ENCODE measurements at regions of chr17 and their contacts with region 1.

Region 1: GRCh38 chr17:29111816-29112499 is 68.2 kb downstream of the MYO18A start:
- DNase-seq: peak; percentile 65 to 73
- ATAC-seq: peak; percentile 70 to 83
- H3K4me3 ChIP-seq: no peak overlapping the region
- H3K27ac ChIP-seq: no peak overlapping the region
- H3K4me1 ChIP-seq: peaks cover 17% of the 10 kb centered on the region
- CTCF ChIP-seq: peak; percentile 89
- EP300 ChIP-seq: no peak
- POLR2A ChIP-seq: no peak
- RAD21 ChIP-seq: peak; percentile 78 to 83

Region 2: GRCh38 chr17:28973425-28973824 is 138.5 kb before region 1 on chr17:
- CTCF ChIA-PET with region 1: interaction called, 255 read pairs
- POLR2A ChIA-PET with region 1: no interaction called
- DNase-seq: no peak
- ATAC-seq: peak in 1 of 2 experiments; percentile 26; a peak in 1 of 6 replicates
- H3K4me3 ChIP-seq: no peak overlapping the region
- H3K27ac ChIP-seq: no peak overlapping the region
- H3K4me1 ChIP-seq: no peaks in the 10 kb centered on the region
- CTCF ChIP-seq: no peak
- EP300 ChIP-seq: no peak
- POLR2A ChIP-seq: no peak
- RAD21 ChIP-seq: no peak

Region 3: GRCh38 chr17:28982131-28982951 is 129.6 kb before region 1 on chr17:
- CTCF ChIA-PET with region 1: interaction called, 29 read pairs
- POLR2A ChIA-PET with region 1: no interaction called
- DNase-seq: no peak
- ATAC-seq: no peak
- H3K4me3 ChIP-seq: no peak overlapping the region
- H3K27ac ChIP-seq: no peak overlapping the region
- H3K4me1 ChIP-seq: no peaks in the 10 kb centered on the region
- CTCF ChIP-seq: no peak
- EP300 ChIP-seq: no peak
- POLR2A ChIP-seq: no peak
- RAD21 ChIP-seq: no peak

Region 4: DNA sequence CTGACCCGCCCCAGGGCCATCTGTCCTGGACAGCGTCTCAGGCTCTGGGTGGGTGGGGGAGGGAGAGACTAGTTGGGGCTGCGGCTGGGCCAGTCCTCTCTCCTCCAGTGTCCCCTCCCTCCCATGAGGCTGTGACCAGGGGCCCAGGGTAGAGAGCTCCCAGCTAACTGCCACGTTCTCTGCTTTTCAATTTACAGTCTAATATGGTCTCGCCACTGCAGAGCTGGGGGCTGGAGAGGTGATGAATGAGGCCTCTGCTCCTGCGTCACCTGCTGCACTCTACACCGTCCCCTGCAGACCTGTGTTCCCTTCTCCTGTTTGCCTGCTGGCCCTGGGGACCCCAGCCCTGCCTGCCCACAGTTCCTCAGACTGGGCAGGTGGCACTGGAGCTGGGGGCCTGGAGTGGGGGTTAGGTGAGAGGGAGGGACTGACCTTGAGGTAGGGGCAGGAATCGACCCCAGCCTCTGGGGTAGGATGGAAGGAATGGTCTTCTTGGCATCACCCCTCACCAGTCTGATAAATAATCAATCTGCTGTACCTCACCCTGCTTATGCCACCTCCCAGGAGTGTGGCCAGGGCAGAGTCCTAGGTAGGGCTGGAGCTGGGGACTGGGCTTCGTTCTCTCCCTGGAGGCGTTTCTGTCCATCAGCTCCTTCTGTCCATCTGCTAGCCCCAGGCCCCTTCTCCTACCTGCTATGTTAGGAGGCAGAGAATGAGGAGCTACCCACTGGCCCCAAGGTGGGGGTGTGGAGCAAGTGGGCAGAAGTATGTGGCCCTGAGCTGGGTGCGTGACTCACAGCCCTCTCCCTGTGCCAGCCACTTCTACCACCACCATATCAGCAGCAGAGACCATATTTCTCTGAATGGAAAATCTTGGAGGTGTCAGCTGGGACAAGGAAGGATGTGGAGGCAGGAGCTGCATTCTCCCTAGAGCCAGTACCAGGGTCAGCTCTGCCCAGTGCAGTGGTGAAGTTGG is 119.0 kb before region 1 on chr17:
- CTCF ChIA-PET with region 1: interaction called, 33 read pairs
- POLR2A ChIA-PET with region 1: no interaction called
- DNase-seq: peak in 1 of 2 experiments; percentile 32
- ATAC-seq: peak; percentile 53 to 68; a peak in 5 of 6 replicates
- H3K4me3 ChIP-seq: no peak overlapping the region
- H3K27ac ChIP-seq: no peak overlapping the region
- H3K4me1 ChIP-seq: no peaks in the 10 kb centered on the region
- CTCF ChIP-seq: no peak
- EP300 ChIP-seq: no peak
- POLR2A ChIP-seq: no peak
- RAD21 ChIP-seq: no peak

Region 5: DNA sequence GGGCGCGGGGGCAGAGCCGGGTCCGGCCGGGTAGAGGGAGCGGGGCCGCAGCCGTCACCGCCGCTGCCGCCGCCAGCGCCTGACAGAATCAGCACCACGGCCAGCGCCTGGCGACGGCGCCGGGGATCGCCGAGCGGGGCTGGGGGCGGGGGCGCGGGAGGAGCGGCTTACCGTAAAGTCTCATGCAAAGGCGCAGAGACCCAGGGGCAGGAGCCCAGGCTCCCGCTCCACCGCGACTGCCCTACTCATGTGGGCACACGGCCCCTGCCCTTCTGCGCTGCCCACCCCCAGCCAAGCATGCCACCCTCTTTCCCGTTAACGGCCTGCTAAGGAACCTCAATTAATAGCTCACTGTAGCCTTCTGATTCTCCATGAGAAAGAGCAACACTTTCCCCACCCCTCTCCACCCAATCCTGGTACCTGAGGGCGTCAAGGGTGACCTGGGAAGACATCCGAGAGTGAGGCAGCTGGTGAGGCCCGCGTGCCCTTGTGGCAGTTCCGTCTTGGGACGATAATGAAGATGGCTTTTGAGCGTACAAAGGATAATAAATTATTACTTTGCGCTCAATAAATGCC is 105.9 kb before region 1 on chr17 and contains the start of gene SEZ6:
- CTCF ChIA-PET with region 1: interaction called, 34 read pairs
- POLR2A ChIA-PET with region 1: no interaction called
- DNase-seq: peak; percentile 65 to 79
- ATAC-seq: peak; percentile 54 to 76
- H3K4me3 ChIP-seq: peak within 1 kb of the TSS; percentile 38
- H3K27ac ChIP-seq: no peak within 1 kb of the TSS
- H3K4me1 ChIP-seq: peaks cover 31% of the 10 kb centered on the region
- CTCF ChIP-seq: no peak
- EP300 ChIP-seq: no peak; a peak in 1 of 5 replicates
- POLR2A ChIP-seq: no peak
- RAD21 ChIP-seq: no peak
- polyA plus RNA-seq, gene SEZ6: not detected in 2 replicates

Region 6: DNA sequence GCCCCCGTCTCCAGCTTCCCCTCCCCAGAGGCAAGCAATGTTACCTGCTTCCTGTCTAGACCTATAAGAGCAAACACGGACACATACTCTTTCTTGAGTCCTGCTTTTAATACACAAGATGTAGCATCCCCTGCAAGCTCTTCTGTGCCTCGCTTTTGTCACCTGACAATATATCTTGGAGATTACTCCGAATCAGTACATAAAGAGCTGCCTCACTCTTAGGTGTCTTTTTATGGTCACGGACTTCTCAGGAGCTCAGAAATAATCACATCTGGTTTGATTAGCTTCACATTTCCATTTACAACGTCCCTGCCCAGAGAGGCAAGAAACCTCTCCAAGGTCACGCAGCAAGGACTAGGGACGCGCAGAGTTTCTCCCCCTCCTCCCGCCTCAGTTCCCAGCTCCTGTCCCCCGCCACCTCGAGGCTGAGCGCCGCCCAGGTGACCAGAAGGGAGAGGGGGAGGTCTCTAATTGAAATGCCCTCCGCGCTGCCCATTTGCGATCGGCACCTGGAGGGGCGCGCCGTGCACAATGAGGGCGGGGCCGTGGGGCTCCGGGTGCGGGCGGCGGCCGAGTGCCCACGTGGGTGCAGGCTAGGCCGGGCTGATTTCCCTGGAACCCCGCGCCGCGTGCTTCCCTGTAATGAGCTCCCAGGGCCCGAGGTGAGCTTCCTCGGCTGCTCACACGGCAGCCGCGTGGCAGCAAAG is 92.3 kb before region 1 on chr17:
- CTCF ChIA-PET with region 1: interaction called, 36 read pairs
- POLR2A ChIA-PET with region 1: no interaction called
- DNase-seq: no peak
- ATAC-seq: no peak
- H3K4me3 ChIP-seq: no peak overlapping the region
- H3K27ac ChIP-seq: no peak overlapping the region
- H3K4me1 ChIP-seq: no peaks in the 10 kb centered on the region
- CTCF ChIP-seq: no peak
- EP300 ChIP-seq: no peak
- POLR2A ChIP-seq: no peak
- RAD21 ChIP-seq: no peak

Region 7: GRCh38 chr17:29054835-29055234 is 57.1 kb before region 1 on chr17:
- CTCF ChIA-PET with region 1: interaction called, 10 read pairs
- POLR2A ChIA-PET with region 1: no interaction called
- DNase-seq: no peak
- ATAC-seq: peak in 1 of 2 experiments; percentile 7; a peak in 1 of 6 replicates
- H3K4me3 ChIP-seq: no peak overlapping the region
- H3K27ac ChIP-seq: no peak overlapping the region
- H3K4me1 ChIP-seq: peaks cover 7% of the 10 kb centered on the region
- CTCF ChIP-seq: no peak
- EP300 ChIP-seq: no peak
- POLR2A ChIP-seq: no peak
- RAD21 ChIP-seq: no peak

Region 8: DNA sequence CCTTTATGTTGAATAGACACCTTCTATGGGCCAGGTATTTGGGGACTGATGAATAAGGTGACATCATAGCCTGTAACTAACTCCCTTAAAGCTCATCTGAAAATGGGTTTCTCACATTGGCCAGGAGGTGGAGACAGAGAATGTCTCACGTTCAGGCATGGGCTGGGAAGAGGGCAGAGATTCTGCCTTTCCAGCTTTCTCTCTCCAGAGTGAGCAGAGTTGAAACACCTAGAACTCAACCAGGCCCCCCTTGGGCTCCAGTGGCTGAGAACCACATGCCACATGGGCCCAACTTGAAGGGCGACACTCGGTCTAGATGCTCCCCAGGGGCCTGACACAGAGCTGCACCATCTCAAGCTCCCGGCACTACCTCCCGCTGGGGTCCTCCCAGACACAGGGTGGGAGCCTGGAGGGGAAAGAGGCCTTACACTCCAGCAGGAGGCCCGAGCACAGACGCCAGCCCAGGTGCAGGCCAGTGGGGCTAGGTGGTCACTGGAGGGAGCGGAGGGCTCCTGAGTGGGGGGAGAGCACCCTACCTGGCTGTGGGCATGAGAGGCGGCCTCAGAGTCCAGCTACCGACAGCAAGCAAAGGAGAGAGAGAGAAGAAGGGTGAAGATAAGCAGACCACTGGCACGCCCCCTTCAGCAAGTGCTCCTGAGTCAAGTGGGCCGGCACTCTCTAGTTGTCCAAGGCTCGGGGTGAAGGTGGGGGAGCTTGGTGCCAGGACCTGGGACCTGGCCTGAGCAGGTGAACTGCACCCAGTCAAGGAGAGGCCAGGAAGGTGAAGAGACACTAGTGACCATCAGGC is 12.4 kb after region 1 on chr17:
- CTCF ChIA-PET with region 1: no interaction called
- POLR2A ChIA-PET with region 1: no interaction called
- DNase-seq: peak; percentile 82 to 83
- ATAC-seq: peak; percentile 83 to 93
- H3K4me3 ChIP-seq: no peak overlapping the region
- H3K27ac ChIP-seq: peak overlapping the region in 1 of 2 experiments; percentile 39; a peak in 3 of 6 replicates
- H3K4me1 ChIP-seq: peaks cover 16% of the 10 kb centered on the region
- CTCF ChIP-seq: peak; percentile 88
- EP300 ChIP-seq: no peak
- POLR2A ChIP-seq: no peak
- RAD21 ChIP-seq: peak; percentile 88 to 96